Adrenal gland (tissue), 19 donors: ENCODE measurements at regions of chr17 and their contacts with region 1.

Region 1: GRCh38 chr17:82429824-82430223 is 11.4 kb upstream of the OGFOD3 start:
- DNase-seq: no peak
- H3K4me3 ChIP-seq: no peak overlapping the region
- H3K27ac ChIP-seq: no peak overlapping the region
- H3K4me1 ChIP-seq: no peaks in the 10 kb centered on the region
- H3K27me3 ChIP-seq: no peaks in the 10 kb centered on the region
- CTCF ChIP-seq: no peak
- POLR2A ChIP-seq: no peak

Region 2: DNA sequence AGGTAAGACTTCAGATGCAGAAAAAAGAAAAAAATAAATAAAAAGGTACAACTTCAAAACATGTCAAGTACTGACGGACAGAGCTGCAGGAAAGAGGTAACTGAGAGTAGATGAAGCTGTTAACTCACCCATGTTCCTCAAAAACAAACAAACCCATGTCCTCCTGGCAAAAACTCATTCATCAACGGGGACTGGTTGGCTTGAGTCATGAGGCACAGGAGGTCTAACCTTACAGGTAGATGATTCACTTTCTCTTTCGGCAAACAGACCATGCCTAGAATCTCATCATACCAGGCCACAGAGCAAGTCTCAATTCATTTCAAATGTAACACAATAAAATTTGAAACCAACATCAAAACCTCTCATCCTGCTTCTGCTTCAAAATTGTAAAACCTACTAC is 319.5 kb before region 1 on chr17:
- intact Hi-C with region 1: loop called in 1 of 2 experiments (anchors 5 kb)
- DNase-seq: no peak
- H3K4me3 ChIP-seq: no peak overlapping the region
- H3K27ac ChIP-seq: no peak overlapping the region
- H3K4me1 ChIP-seq: peaks cover 4 to 20% of the 10 kb centered on the region in 2 donors
- H3K27me3 ChIP-seq: no peaks in the 10 kb centered on the region
- CTCF ChIP-seq: no peak
- POLR2A ChIP-seq: no peak

Region 3: DNA sequence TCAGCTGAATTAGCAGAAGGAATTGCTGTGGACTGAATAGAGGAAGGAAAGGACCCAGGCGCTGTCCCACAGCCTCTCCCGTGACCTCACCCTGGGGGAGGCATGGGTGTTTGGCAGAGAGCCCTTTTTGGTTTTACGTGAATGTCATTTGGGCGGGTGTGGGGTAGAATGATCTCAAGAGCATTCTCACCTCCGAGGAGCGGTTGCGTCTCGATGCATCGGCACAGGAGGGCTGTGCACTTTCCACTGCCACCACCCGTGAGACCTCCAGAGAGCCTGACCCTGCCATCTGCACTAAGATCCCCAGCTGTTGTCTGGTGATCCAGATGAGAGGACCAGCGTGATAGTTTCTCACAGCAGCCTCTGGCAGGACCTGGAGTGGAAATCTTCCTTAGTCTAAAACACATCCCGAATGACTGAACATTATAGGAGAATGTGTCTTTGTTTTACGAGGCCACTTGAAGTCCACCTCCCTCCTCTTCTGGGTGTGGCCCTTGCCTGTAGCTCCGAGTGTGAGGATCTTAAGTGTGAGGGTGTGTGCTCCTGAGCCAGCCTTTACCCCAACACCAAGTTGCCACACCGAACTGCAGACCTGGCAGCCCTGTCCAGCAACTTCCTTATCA is 119.0 kb after region 1 on chr17:
- intact Hi-C with region 1: no loop called
- DNase-seq: peak in 6 of 7 donors; percentile 48 to 72 (median 58)
- H3K4me3 ChIP-seq: no peak overlapping the region
- H3K27ac ChIP-seq: peak overlapping the region in 3 of 5 donors; percentile 20 to 70 (median 52)
- H3K4me1 ChIP-seq: peaks cover 40 to 54% of the 10 kb centered on the region in 2 donors
- H3K27me3 ChIP-seq: no peaks in the 10 kb centered on the region
- CTCF ChIP-seq: no peak
- POLR2A ChIP-seq: no peak